ENCODE measurements at regions of chr6 and their contacts with region 1.

Region 1: GRCh38 chr6:24431045-24431451 is 28.3 kb downstream of the MRS2 start:
- DNase-seq: no peak
- H3K4me3 ChIP-seq: no peak overlapping the region
- H3K27ac ChIP-seq: no peak overlapping the region
- H3K4me1 ChIP-seq: no peaks in the 10 kb centered on the region
- H3K27me3 ChIP-seq: no peaks in the 10 kb centered on the region
- CTCF ChIP-seq: peak; percentile 58 to 70 (median 69)

Region 2: DNA sequence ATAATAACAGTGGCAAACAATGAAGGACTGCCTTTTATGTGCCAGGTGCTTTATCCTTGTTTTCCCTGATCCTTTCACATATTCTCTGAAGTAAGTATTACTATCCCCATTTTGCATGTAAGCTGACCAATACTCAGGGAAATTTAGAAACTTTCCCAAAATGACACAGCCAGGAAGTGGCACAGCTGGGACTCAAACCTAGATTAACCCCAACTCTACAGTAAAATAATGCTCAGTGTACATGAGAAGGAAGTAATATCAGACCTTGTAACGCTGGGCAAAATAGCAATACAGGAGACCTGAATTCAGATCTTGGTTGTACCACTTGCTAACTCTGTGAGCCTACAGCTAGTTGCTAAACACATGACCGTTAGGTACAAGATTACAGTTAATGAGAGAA is 331.9 kb before region 1 on chr6:
- intact Hi-C with region 1: no loop called
- DNase-seq: no peak
- H3K4me3 ChIP-seq: no peak overlapping the region
- H3K27ac ChIP-seq: no peak overlapping the region
- H3K4me1 ChIP-seq: no peaks in the 10 kb centered on the region
- H3K27me3 ChIP-seq: no peaks in the 10 kb centered on the region
- CTCF ChIP-seq: no peak

Region 3: DNA sequence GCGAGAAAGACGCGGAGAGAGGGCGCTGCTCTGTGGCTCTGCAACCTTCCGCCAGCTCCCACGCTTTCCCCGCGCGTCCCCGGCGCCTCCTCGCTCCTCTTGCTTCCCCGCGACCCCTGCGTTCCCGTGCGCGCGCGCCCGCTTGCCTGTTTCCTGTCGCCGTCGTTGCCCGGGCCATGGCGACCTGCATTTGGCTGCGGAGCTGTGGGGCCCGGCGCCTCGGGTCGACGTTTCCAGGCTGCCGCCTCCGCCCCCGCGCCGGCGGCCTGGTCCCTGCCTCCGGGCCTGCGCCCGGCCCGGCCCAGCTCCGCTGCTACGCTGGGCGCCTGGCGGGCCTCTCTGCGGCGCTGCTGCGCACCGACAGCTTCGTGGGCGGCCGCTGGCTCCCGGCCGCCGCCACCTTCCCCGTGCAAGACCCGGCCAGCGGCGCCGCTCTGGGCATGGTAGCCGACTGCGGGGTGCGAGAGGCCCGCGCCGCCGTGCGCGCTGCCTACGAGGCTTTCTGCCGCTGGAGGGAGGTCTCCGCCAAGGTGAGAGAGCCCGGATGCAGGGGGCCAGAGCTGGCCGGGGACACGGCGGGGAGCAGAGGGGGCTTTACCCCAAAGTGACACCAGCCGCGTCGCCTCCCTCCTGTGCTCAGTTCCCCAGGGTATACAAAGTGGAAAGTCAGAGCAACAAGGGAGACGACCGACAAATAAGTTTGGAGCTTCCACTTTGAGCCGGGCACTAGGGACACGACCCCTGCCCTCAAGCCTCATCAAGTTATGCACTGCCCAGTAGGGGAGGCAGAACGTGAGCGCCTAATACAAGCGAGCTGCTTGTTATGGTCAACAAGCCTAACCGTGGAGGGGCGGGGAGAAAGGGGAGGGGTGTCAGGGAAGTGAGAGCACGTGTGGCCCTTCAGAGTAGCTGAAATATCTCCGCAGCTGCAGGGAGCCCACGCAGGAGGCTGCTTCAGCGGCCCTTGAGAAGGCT is 64.1 kb after region 1 on chr6 and contains the start of gene ALDH5A1:
- intact Hi-C with region 1: loop called (anchors 5 kb)
- DNase-seq: peak in 1 of 2 donors; percentile 82
- H3K4me3 ChIP-seq: peak within 1 kb of the TSS; percentile 74 to 82
- H3K27ac ChIP-seq: peak within 1 kb of the TSS; percentile 84 to 89
- H3K4me1 ChIP-seq: peaks cover 0 to 9% of the 10 kb centered on the region in 2 donors
- H3K27me3 ChIP-seq: no peaks in the 10 kb centered on the region
- CTCF ChIP-seq: peak; percentile 11 to 40 (median 37)
- total RNA-seq, gene ALDH5A1: 0.21 TPM

Region 4: DNA sequence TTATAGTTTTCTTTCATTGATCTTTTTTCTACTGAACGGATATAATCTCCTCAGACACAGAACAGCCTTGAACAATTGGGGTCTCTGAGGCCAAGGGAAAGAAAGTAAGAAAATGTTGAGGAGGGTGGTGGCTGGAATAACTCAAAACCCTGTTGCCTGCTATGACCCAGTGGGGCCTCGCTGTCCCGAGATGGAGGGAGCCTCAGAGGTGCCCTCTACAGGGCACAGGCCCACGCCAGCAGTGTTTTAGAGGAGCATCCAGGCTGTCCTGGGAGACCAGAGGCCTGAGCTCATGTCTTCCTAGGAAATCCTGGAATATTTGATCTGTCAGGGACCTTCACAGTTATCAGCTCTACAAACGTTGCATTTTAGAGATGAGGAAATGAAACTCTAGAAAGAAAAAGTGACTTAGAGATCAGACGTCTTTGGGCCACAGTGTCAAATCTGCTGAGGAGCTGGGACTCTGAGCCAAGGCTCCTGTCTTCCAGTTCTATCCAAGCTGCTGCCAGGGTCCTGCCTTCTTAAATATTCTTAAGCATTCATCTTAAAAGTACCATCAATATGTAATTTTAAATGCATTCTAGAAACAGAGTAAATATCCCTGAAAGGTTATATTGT is 90.0 kb after region 1 on chr6:
- intact Hi-C with region 1: loop called (anchors 1 kb)
- DNase-seq: peak in 1 of 2 donors; percentile 79
- H3K4me3 ChIP-seq: no peak overlapping the region
- H3K27ac ChIP-seq: no peak overlapping the region
- H3K4me1 ChIP-seq: no peaks in the 10 kb centered on the region
- H3K27me3 ChIP-seq: no peaks in the 10 kb centered on the region
- CTCF ChIP-seq: peak; percentile 31 to 78 (median 66)

Region 5: DNA sequence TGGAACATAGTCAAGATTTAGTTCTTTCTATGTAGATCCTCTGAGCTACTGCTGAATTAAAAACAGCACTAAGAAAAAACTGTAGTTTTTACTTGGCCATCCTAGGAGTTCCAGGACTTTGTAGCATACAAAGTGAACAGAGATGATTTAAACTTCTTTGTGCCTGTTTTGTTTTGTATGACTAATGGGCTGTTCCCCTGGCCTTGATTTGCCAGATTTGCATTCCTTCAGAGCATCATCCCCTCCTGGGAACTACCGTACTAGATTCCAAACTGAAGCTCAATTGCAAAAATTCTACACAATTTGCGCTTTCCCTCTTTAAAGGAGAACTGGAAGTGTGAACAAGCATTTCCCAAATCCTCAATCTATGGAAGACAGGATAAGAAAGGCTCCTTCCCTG is 258.9 kb after region 1 on chr6:
- intact Hi-C with region 1: loop called (anchors 2 kb)
- DNase-seq: no peak
- H3K4me3 ChIP-seq: no peak overlapping the region
- H3K27ac ChIP-seq: no peak overlapping the region
- H3K4me1 ChIP-seq: no peaks in the 10 kb centered on the region
- H3K27me3 ChIP-seq: no peaks in the 10 kb centered on the region
- CTCF ChIP-seq: no peak